Esophagus muscularis mucosa (tissue), 4 donors: ENCODE measurements at regions of chr16 and their contacts with region 1.

Region 1: DNA sequence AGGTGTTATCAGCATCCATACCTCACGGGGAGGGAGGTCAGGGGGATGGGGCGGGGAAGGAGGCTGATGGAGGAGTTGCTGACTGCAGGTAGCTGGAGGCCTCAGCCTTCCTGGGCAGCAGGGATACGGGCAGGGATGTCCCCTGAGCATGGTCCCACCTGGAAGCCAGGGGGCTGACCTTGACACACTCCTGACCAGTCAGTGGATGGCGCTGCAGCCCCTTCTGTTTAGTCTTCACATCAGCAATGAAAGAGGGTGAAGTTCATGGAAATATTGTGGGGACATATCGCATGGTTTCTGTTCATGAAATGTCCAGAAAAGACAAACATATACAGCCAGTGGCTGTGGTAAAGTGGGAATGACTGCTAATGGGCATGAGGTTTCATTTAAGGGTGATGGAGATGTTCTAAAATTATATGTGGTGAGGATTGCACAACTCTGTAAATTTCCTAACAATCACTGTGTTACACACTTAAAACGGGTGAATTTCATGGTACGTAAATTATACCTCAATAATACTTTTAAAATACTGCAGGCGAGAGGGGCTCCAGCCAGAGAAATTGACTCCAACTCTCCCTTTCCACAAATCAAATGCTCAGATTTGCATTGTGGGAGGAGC is 489.6 kb downstream of the CDH13 start:
- DNase-seq: no peak
- H3K4me3 ChIP-seq: no peak overlapping the region
- H3K27ac ChIP-seq: no peak overlapping the region
- H3K4me1 ChIP-seq: peaks cover 0 to 3% (median 0%) of the 10 kb centered on the region in 4 donors
- H3K27me3 ChIP-seq: peaks cover 0 to 5% (median 0%) of the 10 kb centered on the region in 4 donors
- CTCF ChIP-seq: no peak
- EP300 ChIP-seq: no peak
- POLR2A ChIP-seq: no peak

Region 2: DNA sequence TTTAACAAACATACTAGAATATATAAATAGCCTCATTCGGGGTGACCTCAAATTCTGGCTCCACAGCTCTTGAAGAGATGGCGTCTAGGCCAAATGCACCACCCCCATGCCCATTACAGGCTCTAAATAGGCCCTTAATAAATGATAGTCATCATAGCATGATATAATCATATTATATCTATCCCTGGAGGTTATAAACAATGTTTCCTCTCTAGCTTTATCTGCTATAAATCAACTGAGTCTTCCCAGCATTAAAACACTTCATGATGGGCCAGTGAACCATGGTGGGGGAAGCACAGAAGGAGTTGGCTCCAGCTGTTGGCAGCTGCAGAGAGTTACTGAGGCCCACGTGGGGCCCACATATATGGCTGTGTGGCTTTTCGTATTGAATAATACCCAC is 731.4 kb before region 1 on chr16:
- intact Hi-C with region 1: loop called (anchors 5 kb)
- DNase-seq: no peak
- H3K4me3 ChIP-seq: no peak overlapping the region
- H3K27ac ChIP-seq: no peak overlapping the region
- H3K4me1 ChIP-seq: no peaks in the 10 kb centered on the region
- H3K27me3 ChIP-seq: no peaks in the 10 kb centered on the region
- CTCF ChIP-seq: no peak
- EP300 ChIP-seq: no peak
- POLR2A ChIP-seq: no peak

Region 3: GRCh38 chr16:83054283-83054682 is 62.1 kb before region 1 on chr16:
- intact Hi-C with region 1: no loop called
- DNase-seq: no peak
- H3K4me3 ChIP-seq: no peak overlapping the region
- H3K27ac ChIP-seq: no peak overlapping the region
- H3K4me1 ChIP-seq: no peaks in the 10 kb centered on the region
- H3K27me3 ChIP-seq: no peaks in the 10 kb centered on the region
- CTCF ChIP-seq: no peak
- EP300 ChIP-seq: no peak
- POLR2A ChIP-seq: no peak